HEK293T (cell line): ENCODE measurements at regions of chr14 and their contacts with region 1.

Region 1: GRCh38 chr14:20413045-20413799 is at the start of gene TEP1:
- DNase-seq: peak; percentile 79

Region 2: DNA sequence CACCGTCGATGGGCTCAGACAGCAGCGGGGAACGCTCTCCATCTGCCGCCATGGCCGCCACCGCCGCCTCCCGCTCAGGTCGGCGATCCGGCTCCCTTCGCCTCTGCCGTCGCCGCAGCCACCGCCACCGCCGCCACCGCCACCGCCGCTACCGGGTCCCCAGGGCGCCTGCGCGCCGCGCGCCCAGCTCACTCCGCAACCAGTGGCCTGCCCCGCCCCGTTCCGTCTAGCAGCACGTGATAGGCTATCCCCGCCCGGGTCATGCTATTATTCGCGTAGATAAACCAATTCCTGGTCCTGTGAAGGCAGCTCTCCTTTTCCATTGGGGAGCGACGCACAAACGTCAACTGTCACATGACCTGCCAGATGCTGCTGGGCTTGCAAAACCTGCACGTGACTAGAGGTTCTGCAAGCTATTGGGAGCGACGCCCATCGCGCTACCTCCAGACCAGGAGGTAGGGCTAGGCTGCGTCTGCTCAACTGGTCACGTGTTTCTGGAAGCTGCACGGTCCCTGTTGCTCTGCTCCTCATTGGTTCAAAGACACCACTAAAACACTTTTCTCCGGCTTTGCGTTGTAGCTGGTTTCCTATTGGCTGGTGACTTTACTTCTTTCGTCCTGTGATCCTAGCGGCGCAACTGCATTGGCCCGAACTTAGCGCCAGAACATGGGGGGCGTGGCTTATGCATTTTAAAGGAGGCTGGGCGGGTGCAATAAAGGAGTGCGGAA is 48.2 kb after region 1 on chr14 and contains the start of gene PIP4P1:
- CTCF ChIA-PET with region 1: interaction called, 6 read pairs
- POLR2A ChIA-PET with region 1: interaction called, 58 read pairs
- DNase-seq: peak; percentile 90

Region 3: DNA sequence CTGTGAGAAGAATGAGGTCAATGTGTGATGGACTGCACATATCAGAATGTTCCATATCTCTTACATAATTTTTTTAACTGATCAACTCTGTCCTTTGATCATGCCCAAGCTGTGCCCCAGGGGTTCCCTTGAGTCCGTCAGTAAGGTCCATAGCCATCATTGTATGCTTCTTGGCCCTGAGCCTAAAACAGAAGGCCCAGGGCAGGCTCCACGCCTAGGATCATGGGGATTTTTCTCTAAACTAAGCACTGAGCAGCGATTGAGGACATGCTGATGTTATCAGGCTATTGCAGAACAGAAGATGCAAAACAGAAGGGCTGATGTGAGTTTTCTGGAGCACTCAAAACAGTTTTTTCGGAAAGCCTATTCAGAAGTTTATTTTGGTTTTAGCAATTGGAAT is 126.7 kb after region 1 on chr14:
- CTCF ChIA-PET with region 1: no interaction called
- POLR2A ChIA-PET with region 1: no interaction called
- DNase-seq: no peak